ENCODE measurements at regions of chr2 and their contacts with region 1.

Region 1: GRCh38 chr2:36717603-36718266 is 21.2 kb downstream of the VIT start:
- DNase-seq: no peak
- H3K4me3 ChIP-seq: no peak overlapping the region
- H3K27ac ChIP-seq: no peak overlapping the region
- H3K4me1 ChIP-seq: no peaks in the 10 kb centered on the region
- H3K27me3 ChIP-seq: no peaks in the 10 kb centered on the region
- CTCF ChIP-seq: no peak

Region 2: DNA sequence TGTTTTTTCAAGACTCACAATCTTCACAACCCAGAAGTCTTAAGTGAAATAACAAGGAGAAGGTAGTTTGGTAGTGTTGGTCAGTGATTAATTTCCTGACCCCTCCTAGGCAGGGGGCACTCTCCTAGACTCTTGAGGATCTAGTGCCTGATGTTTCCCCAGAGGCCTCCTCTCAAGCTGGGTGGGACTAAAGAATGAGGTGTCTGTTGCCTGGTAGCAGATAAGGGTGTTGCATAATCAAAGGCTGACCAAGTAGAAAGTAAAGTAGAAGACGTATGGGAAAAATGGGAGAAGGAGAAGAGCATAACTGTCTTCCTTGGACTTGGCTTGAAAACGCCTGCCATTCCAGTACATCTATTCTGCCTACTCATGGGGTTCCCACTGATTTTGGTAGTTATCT is 16.6 kb after region 1 on chr2:
- CTCF ChIA-PET with region 1: no interaction called
- POLR2A ChIA-PET with region 1: no interaction called
- intact Hi-C with region 1: loop called (anchors 1 kb)
- DNase-seq: no peak
- H3K4me3 ChIP-seq: no peak overlapping the region
- H3K27ac ChIP-seq: no peak overlapping the region
- H3K4me1 ChIP-seq: peaks cover 4% of the 10 kb centered on the region
- H3K27me3 ChIP-seq: no peaks in the 10 kb centered on the region
- CTCF ChIP-seq: no peak

Region 3: DNA sequence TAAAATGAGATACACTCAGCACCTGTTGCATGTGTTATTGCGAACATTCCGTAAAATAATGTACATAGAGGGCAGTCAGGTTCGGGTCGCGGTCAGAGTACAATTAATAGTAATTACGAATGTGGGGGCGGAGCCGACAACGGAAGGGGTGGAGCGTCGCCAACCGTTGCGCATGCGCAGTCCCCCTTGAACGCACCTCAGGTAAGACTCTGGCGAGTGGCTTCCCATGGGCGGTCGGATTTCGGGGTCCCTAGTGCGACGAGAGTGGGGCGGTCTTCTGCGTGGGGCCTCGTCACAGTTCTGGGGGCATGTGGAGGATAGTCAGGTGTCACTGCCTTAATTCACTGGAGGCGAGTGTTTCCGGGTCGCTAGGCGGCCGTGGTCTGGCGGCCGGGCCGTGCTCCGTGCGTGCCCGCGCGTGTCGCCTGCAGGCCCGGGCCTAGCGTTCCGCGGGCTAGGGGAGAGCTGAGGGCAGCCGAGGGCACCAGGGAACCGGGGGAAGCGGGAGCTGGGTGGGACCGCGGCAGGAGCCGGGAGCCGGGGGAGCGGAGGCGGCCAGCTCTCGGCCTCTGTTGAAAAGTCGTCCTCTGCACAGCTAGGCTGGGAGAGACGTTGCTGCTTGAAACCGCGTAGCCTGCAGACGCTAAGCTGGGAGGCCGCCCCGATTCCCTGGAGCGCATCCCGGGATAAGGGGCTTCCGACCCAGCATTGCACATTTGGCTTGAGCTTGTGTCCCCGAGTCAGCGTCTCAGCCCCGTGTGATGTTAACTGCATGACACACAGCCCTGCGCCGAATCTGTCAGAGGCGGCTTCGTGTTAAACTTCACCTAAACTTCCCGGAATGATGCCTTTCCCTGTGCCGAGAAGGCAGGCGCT is 478.8 kb after region 1 on chr2 and contains the start of gene CEBPZOS:
- CTCF ChIA-PET with region 1: no interaction called
- POLR2A ChIA-PET with region 1: no interaction called
- intact Hi-C with region 1: no loop called
- DNase-seq: peak; percentile 81
- H3K4me3 ChIP-seq: peak within 1 kb of the TSS; percentile 77
- H3K27ac ChIP-seq: peak within 1 kb of the TSS; percentile 85
- H3K4me1 ChIP-seq: peaks cover 4% of the 10 kb centered on the region
- H3K27me3 ChIP-seq: no peaks in the 10 kb centered on the region
- CTCF ChIP-seq: no peak
- total RNA-seq, gene CEBPZOS: 56.9 and 61.8 TPM in 2 replicates

Measured in A673 (cell line).